HEK293 (cell line): ENCODE measurements at regions of chr14 and their contacts with region 1.

Region 1: DNA sequence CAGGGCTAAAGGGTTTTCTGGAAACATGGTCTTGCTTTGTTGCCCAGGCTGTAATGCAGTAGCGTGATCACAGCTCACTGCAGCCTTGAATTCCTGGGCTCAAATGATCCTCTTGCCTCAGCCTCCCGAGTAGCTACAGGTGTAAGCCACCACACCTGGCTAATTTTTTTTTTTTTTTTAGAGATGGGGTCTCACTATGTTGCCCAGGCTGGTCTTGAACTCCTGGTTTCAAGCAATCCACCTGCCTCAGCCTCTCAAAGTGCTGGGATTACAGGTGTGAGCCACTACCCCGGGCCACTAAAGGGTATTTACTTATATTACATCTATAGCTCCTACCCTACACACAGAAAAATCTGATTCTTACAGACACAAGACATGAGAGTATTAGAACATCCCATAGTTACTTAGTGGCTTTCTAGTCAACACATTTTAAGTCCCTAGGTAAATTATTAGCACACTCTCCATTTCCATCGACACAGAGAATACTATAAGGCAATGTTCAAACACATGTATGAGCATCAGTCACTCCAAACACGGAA is 6.2 kb upstream of the DCAF11 start:
- H3K4me3 ChIP-seq: no peak overlapping the region
- H3K27ac ChIP-seq: no peak overlapping the region
- H3K4me1 ChIP-seq: no peaks in the 10 kb centered on the region
- CTCF ChIP-seq: no peak

Region 2: GRCh38 chr14:24051789-24052655 is 56.4 kb before region 1 on chr14 and contains the start of gene CARMIL3:
- CTCF ChIA-PET with region 1: interaction called, 163 read pairs
- POLR2A ChIA-PET with region 1: interaction called, 17 read pairs
- H3K4me3 ChIP-seq: peak within 1 kb of the TSS; percentile 52
- H3K27ac ChIP-seq: no peak within 1 kb of the TSS; the same call in 1 of the 2 replicates
- H3K4me1 ChIP-seq: no peaks in the 10 kb centered on the region
- CTCF ChIP-seq: 0 out of 2 replicates have a peak, but pooled peaks have one; percentile 12

Region 3: DNA sequence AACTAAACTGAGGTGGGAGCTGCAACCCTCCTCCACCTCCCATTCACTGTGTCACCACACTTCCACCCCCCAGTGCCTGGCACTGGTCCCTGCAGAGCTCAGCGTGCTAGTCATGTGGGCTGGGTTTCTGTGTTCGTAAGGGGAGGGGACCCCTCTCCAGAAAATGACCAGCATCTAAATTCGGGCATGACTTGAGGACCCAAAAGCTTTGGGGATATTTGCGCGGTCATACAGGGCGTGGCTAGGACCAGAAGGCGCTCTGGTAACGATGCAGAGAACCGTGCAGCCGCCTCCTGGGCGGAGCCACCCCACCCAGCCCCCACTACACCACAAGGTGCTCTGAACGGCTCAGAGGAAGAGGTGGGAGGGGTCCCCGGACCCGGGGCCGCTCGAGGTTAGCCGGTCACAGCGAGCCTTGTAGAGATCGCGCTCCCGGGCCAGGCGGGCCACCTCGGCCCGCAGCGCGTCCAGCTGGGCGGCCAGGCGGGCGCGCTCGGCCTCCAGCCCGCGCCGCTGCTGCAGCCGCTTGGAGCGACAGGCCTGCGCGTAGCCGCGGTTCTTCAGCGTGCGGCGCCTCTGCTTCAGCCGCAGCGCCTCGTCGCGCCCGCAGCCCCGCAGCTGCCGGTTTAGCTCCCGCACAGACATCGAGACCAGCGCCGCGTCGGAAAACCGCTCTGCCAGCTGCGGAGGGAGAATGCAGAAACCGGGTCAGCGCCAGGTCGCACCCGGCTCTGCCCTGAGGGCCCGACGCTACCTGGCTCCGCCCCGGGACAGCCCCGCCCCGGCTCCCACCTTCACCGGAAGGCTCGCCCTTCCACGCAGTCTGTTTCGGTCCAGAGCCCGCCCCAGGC is 27.3 kb before region 1 on chr14:
- CTCF ChIA-PET with region 1: interaction called, 11 read pairs
- POLR2A ChIA-PET with region 1: interaction called, 4 read pairs
- H3K4me3 ChIP-seq: peak overlapping the region; percentile 58
- H3K27ac ChIP-seq: peak overlapping the region; percentile 47; the same call in 1 of the 2 replicates
- H3K4me1 ChIP-seq: peaks cover 10% of the 10 kb centered on the region
- CTCF ChIP-seq: no peak

Region 4: DNA sequence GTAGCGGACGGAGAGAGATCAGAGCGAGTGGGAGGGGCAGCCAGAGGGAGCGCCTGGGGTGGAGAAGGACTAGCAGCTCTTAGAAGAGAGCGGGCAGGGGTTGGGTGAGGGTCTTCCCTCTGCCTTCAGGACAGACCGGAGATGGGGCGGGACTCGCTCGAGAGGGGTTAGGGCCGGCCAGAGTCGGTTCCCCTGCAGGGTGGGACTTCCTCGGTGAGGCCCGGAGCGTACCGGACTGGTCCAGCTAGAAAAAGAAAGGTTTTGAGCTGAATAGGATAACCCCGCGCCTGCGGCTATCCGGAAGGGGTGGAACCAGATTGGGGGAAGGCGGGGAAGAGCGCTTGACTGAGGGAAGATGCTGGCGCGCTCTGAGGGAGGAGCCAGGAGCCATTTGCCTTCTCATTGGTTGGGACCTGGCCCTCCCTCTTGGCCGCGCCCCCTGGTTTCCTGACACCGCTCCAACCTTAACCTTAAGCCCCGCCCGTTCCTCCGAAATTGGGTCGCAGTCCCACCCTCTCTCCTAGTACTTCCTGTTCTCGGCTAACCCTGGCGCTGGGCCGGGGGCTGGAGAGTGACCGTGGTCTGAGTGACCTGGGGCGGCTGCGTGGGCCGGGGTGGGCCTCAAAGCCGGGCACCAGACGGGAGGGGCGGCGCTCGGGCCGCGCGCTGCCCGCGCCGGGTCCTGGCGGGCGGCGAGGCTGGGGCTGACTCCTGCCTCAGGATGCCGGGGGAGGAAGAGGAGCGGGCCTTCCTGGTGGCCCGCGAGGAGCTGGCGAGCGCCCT is 38.8 kb after region 1 on chr14 and contains the start of gene RNF31:
- CTCF ChIA-PET with region 1: interaction called, 10 read pairs
- POLR2A ChIA-PET with region 1: interaction called, 60 read pairs
- H3K4me3 ChIP-seq: peak within 1 kb of the TSS; percentile 91
- H3K27ac ChIP-seq: peak within 1 kb of the TSS; percentile 81; the same call in 1 of the 2 replicates
- H3K4me1 ChIP-seq: peaks cover 8% of the 10 kb centered on the region
- CTCF ChIP-seq: no peak

Region 5: GRCh38 chr14:24226477-24226876 is 118.1 kb after region 1 on chr14:
- CTCF ChIA-PET with region 1: no interaction called
- POLR2A ChIA-PET with region 1: no interaction called
- H3K4me3 ChIP-seq: no peak overlapping the region
- H3K27ac ChIP-seq: no peak overlapping the region
- H3K4me1 ChIP-seq: no peaks in the 10 kb centered on the region
- CTCF ChIP-seq: no peak

Region 6: DNA sequence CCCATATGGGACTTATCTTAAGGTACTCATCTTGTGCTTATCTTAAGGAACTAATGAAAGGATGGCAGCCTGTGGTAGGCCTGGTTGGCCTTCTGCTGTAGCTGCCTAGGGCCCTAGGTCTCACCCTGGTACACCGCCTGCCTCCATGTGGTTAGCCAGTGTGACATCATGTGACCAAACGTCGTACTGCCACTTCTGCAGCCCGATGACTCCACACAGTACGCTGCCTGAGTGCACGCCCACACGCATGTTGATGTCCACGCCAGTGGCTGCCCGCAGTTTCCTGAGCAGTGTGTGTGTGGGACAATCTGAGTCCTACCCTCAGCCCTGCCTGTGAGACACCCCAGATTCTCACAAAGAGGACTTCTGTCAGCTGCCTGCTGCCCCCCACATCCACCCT is 221.3 kb after region 1 on chr14:
- CTCF ChIA-PET with region 1: no interaction called
- POLR2A ChIA-PET with region 1: no interaction called
- H3K4me3 ChIP-seq: no peak overlapping the region
- H3K27ac ChIP-seq: no peak overlapping the region
- H3K4me1 ChIP-seq: peaks cover 4% of the 10 kb centered on the region; the same call in 1 of the 2 replicates
- CTCF ChIP-seq: no peak

Region 7: DNA sequence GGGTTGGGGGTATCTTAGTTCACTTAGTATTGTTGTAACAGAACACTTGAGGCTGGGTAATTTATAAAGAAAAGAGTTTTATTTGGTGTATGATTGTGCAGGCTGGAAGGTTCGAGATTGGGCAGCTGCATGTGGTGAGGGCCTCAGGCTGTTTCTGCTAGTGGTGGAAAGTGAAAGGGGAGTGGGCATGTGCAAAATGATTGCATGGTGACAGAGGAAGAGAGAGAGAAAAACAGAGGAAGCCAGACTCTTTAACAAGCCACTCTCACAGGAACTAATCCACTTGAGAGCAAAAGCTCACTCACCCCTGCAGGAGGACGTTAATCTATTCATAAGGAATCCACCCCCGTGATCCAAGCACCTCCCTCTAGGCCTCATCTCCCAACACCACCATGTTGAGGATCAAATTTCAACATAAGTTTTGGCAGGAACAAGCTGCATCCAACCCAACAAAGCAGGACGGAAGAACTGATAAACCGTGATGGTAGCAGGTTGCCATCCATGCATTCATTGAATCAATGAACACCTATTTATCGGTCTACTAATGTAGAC is 690.6 kb after region 1 on chr14:
- CTCF ChIA-PET with region 1: no interaction called
- POLR2A ChIA-PET with region 1: no interaction called
- H3K4me3 ChIP-seq: no peak overlapping the region
- H3K27ac ChIP-seq: no peak overlapping the region
- H3K4me1 ChIP-seq: no peaks in the 10 kb centered on the region
- CTCF ChIP-seq: no peak